ENCODE measurements at regions of chr2 and their contacts with region 1.

Region 1: DNA sequence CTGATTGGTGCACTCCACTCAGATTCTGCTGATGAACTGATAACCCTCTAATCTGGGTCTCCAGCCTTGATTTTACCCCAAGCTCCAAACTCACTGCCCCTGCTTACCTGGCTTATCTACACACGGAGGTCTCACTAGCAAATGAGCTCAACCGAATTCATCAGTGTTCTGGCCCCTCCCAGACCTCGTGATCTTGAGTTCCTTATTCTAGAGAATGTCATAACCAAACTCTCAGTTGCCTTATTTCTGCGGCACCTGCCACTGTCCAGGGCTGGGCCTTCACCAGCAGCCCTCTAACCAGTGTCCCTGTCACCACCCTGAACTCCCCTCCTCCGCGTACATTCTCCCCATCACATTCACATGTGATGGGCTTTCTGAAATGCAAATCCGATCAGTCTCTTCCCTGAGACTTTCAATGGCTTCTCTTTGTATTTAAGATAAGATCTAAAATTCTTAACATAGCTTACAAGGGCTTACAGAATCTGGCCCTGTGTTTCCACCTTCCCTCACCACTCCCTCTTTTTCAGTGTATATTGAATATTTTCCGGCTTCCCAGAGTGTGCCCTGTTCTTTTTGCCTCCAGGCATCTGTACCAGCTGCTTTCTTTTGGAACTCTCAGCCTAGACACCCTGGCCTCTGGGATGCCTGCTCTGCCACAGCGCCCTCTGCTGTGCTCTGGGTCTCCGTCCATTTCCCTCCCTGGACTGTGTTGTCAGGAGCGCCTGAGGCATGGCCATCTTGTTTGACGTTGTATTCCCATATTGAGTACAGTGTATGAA is 31.1 kb downstream of the NAB1 start:
- DNase-seq: peak; percentile 60
- H3K4me3 Mint-ChIP-seq: no peak overlapping the region
- H3K27ac Mint-ChIP-seq: no peak overlapping the region
- H3K4me1 Mint-ChIP-seq: peaks cover 26% of the 10 kb centered on the region
- H3K27me3 Mint-ChIP-seq: no peaks in the 10 kb centered on the region

Region 2: DNA sequence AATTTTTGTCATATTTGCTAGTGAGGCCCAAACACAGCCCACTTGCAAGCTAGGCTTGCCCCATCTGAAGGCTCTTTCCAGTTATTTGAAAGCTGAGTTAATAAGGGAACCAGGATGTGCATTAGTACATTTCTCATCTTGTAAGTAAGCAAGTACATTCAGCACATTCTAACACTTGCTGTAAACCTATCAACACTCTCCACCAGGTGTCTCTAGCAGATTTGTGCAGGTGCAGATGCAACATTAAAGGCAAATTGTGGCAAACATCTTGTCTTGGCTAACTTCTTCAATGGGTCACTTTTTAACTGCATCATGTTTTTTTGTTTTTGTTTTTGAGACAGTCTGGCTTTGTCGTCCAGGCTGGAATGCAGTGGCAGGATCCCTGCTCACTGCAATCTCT is 297.2 kb before region 1 on chr2:
- CTCF ChIA-PET with region 1: interaction called, 28 read pairs
- DNase-seq: peak; percentile 31
- H3K4me3 Mint-ChIP-seq: no peak overlapping the region
- H3K27ac Mint-ChIP-seq: no peak overlapping the region
- H3K4me1 Mint-ChIP-seq: no peaks in the 10 kb centered on the region
- H3K27me3 Mint-ChIP-seq: peaks cover 5% of the 10 kb centered on the region

Region 3: DNA sequence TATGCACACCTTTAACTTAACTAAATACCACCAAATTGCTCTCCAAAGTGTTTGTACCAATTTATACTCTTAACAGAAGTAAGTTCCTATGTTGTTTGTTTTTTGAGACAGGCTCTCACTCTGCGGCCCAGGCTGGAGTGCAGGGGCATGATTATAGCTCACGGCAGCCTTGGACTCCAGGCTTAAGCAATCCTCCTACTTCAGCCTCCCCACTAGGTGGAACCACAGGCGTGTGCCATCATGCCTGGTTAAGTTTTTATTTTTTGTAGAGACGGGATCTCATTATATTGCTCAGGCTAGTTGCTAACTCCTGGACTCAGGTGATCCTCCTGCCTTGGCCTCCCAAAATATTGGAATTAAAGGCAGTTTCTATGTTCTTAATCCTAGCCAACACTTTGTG is 44.2 kb before region 1 on chr2:
- CTCF ChIA-PET with region 1: interaction called, 10 read pairs
- DNase-seq: no peak
- H3K4me3 Mint-ChIP-seq: no peak overlapping the region
- H3K27ac Mint-ChIP-seq: no peak overlapping the region
- H3K4me1 Mint-ChIP-seq: no peaks in the 10 kb centered on the region
- H3K27me3 Mint-ChIP-seq: peaks cover under 1% of the 10 kb centered on the region

Region 4: GRCh38 chr2:190649798-190650390 is 30.1 kb before region 1 on chr2:
- CTCF ChIA-PET with region 1: interaction called, 12 read pairs
- DNase-seq: no peak
- H3K4me3 Mint-ChIP-seq: peak overlapping the region; percentile 97
- H3K27ac Mint-ChIP-seq: peak overlapping the region; percentile 87
- H3K4me1 Mint-ChIP-seq: peaks cover 26% of the 10 kb centered on the region
- H3K27me3 Mint-ChIP-seq: peaks cover 10% of the 10 kb centered on the region

Region 5: DNA sequence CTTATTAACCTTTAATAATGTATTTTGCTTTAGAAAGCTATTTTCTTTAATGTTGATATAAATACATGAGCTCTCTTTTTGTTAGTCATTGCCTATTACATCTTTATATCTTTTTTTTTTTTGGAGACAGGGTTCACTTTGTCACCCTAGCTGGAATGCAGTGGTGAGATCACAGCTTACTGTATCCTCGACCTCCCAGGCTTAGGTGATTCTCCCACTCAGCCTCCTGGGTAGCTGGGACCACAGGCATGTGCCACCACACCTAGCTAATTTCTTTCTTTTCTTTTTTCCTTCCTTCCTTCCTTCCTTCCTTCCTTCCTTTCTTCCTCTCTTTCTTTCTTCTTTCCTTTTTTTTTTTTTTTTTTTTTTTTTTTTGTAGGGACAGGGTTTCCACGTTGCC is 15.8 kb before region 1 on chr2:
- CTCF ChIA-PET with region 1: interaction called, 24 read pairs
- DNase-seq: no peak
- H3K4me3 Mint-ChIP-seq: no peak overlapping the region
- H3K27ac Mint-ChIP-seq: no peak overlapping the region
- H3K4me1 Mint-ChIP-seq: peaks cover 2% of the 10 kb centered on the region
- H3K27me3 Mint-ChIP-seq: no peaks in the 10 kb centered on the region

Region 6: GRCh38 chr2:190695739-190696138 is 15.7 kb after region 1 on chr2:
- CTCF ChIA-PET with region 1: interaction called, 11 read pairs
- DNase-seq: no peak
- H3K4me3 Mint-ChIP-seq: no peak overlapping the region
- H3K27ac Mint-ChIP-seq: no peak overlapping the region
- H3K4me1 Mint-ChIP-seq: no peaks in the 10 kb centered on the region
- H3K27me3 Mint-ChIP-seq: no peaks in the 10 kb centered on the region

Region 7: DNA sequence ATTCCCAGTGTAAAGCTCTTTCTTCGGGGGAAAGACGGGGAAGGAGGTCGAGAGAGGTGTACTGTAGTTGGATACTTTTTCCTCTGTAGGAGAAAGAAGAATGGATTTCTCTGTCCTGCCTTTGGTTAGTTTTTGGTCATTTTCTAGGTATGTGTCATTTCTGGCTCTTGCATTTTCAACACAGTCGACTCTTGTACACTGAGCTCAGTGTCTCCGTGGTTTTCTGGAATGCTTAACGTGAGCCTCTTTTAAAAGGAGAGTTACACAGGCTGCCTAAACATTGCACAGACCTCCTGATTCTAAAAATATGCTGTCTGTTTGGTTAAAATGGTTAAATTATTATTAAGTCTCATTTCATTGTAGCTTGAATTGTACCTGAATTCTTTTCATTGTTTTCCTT is 178.8 kb after region 1 on chr2:
- CTCF ChIA-PET with region 1: no interaction called
- DNase-seq: no peak
- H3K4me3 Mint-ChIP-seq: no peak overlapping the region
- H3K27ac Mint-ChIP-seq: no peak overlapping the region
- H3K4me1 Mint-ChIP-seq: peaks cover 14% of the 10 kb centered on the region
- H3K27me3 Mint-ChIP-seq: no peaks in the 10 kb centered on the region